Ovary (tissue), 10 donors: ENCODE measurements at regions of chr1 and their contacts with region 1.

Region 1: DNA sequence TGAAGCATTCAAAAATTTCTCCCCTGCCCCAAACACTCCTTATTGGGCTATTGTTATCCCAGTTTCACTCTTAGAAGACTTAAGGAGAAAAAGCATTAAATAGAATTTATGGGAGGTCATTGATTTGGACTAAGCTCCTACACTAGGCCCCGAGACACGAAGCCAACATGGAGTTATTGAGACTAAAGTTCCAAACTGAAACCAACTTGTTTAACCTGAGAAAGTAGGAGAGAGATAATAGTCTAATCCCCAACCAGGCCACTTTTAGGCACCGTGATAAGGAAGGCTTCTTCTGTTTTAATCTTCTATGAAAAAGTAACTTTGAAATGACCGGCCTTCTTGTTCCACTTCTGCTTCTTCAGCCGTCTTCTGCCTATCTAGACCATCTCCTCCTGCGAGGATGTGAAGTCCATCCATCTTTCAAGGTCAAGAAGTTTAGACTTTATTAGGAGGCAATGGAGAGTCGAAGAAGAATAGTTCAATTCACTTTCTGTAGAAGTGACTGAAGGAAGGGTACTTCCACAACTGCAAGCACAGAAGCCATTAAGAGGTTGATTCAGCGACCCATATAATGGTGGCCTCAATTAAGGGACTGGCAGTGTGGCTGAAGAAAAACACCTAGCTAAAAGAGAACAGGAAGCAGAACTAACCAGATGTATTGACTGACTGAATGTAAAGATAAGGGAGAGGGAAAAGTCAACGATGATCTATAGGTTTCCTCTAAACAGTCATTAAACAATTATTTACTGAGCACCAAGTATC is 428.8 kb downstream of the SMYD3 start:
- DNase-seq: no peak
- H3K4me3 ChIP-seq: no peak overlapping the region
- H3K27ac ChIP-seq: no peak overlapping the region
- H3K4me1 ChIP-seq: no peaks in the 10 kb centered on the region
- H3K27me3 ChIP-seq: no peaks in the 10 kb centered on the region
- CTCF ChIP-seq: no peak
- EP300 ChIP-seq: no peak
- POLR2A ChIP-seq: no peak

Region 2: DNA sequence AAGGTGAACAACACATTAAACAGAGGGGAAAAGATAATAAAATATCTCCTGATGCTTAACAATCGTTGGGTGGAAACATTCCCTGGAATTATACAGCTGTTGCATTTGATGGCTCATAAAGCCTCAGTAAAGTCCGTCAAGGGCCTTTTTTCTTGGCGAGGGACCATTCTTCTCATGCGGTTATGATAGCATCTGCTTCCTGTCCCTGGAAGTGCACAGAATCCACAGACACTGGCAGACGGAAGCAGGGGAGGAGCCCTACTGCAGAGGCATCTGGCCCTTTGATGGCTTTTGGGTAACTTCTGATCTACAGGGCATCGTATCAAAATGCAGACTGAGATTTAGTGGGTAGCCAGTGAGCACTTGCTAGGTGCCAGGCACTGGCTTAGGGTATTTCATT is 636.6 kb before region 1 on chr1:
- intact Hi-C with region 1: no loop called
- DNase-seq: no peak
- H3K4me3 ChIP-seq: no peak overlapping the region
- H3K27ac ChIP-seq: no peak overlapping the region
- H3K4me1 ChIP-seq: no peaks in the 10 kb centered on the region
- H3K27me3 ChIP-seq: no peaks in the 10 kb centered on the region
- CTCF ChIP-seq: no peak
- EP300 ChIP-seq: no peak
- POLR2A ChIP-seq: no peak

Region 3: GRCh38 chr1:245641384-245641783 is 436.9 kb before region 1 on chr1:
- intact Hi-C with region 1: loop called in 1 of 4 experiments (anchors 5 kb)
- DNase-seq: no peak
- H3K4me3 ChIP-seq: no peak overlapping the region
- H3K27ac ChIP-seq: no peak overlapping the region
- H3K4me1 ChIP-seq: no peaks in the 10 kb centered on the region
- H3K27me3 ChIP-seq: no peaks in the 10 kb centered on the region
- CTCF ChIP-seq: no peak
- EP300 ChIP-seq: no peak
- POLR2A ChIP-seq: no peak

Region 4: DNA sequence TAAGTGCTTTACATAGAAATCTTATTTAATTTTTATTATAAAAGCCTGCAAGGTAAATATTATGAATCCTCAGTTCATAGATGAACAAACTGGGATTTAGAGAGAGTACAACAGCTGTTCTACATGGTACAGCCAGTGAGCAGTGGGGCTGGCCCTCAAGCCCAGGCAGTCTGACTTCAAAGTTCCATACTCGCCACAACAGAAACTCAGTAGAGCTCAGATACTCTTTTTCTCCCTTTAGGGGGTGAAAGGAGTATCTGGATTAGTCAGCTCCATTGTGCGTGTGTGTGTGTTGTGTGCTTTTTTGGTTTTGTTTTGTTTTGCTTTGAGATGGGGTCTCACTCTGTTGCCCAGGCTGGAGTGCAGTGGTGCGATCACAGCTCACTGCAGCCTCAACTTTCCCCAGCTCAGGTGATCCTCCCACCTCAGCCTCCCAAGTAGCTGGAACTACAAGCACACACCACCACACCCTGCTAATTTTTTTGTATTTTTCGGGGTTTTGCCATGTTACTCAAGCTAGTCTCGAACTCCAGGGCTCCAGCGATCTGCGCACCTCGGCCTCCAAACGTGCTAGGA is 50.3 kb after region 1 on chr1:
- intact Hi-C with region 1: no loop called
- DNase-seq: no peak
- H3K4me3 ChIP-seq: no peak overlapping the region
- H3K27ac ChIP-seq: no peak overlapping the region
- H3K4me1 ChIP-seq: no peaks in the 10 kb centered on the region
- H3K27me3 ChIP-seq: no peaks in the 10 kb centered on the region
- CTCF ChIP-seq: no peak
- EP300 ChIP-seq: no peak
- POLR2A ChIP-seq: no peak